B cell (primary cell): ENCODE measurements at regions of chr1 and their contacts with region 1.

Region 1: DNA sequence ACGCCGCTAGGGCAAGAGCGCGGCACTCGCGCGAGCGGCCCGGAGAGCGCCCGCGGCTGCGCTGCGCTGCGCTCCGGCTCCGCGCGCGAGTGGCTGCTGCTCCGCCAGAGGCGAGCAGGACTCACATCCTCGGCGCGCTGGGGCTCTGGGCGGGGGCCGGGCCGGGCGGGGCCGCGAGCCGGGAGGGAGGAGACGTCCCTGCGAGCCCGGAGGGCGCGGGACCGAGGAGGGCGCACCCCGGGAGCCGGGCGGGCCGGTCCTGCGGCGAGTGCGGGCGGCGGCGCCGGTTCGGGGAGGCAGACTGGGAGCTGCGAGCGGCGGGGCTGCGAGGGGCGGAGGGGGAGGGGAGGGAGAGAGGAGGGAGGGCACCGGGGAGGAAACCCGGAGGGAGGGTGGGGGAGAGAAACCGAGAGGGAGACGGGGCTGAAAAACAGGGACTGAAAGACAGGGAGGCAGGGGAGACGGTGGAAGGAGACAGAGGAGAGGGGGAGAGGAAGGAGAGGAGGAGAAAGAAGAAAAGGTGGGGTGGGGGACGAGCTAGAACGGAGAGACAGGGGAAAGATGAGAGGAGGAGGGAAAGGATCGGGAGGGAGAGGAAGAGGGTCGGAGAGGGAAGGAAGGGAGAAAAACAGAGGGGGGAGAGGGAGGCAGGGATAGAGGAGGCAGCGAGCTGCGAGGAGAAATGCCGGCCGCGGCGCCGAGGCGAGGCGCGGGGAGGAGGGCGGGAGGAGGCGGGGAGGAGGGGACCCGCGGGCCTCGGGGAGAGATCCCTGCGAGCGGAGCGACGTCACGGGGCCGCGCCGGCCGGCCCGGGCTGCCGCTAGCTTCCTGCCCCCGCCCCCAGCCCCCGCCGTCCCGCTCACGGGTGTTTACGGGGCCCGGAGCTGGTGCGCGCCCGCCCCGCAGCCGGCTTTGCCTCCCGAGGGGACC is at the start of gene CAMK2N1:
- DNase-seq: peak; percentile 59
- ATAC-seq: peak; percentile 58
- H3K4me3 ChIP-seq: peak within 1 kb of the TSS in 4 of 5 experiments; percentile 32 to 67 (median 56)
- H3K4me3 Mint-ChIP-seq: peak within 1 kb of the TSS; percentile 86
- H3K27ac ChIP-seq: no peak within 1 kb of the TSS
- H3K27ac Mint-ChIP-seq: peak within 1 kb of the TSS; percentile 41
- H3K4me1 ChIP-seq: peaks cover 25 to 27% of the 10 kb centered on the region in 2 donors
- H3K4me1 Mint-ChIP-seq: peaks cover 18% of the 10 kb centered on the region
- H3K27me3 ChIP-seq: peaks cover 0 to 63% (median 24%) of the 10 kb centered on the region in 4 experiments
- H3K27me3 Mint-ChIP-seq: peaks cover 63% of the 10 kb centered on the region
- CTCF ChIP-seq: no peak
- total RNA-seq, gene CAMK2N1: 6.0 and 6.5 TPM in 2 replicates

Region 2: DNA sequence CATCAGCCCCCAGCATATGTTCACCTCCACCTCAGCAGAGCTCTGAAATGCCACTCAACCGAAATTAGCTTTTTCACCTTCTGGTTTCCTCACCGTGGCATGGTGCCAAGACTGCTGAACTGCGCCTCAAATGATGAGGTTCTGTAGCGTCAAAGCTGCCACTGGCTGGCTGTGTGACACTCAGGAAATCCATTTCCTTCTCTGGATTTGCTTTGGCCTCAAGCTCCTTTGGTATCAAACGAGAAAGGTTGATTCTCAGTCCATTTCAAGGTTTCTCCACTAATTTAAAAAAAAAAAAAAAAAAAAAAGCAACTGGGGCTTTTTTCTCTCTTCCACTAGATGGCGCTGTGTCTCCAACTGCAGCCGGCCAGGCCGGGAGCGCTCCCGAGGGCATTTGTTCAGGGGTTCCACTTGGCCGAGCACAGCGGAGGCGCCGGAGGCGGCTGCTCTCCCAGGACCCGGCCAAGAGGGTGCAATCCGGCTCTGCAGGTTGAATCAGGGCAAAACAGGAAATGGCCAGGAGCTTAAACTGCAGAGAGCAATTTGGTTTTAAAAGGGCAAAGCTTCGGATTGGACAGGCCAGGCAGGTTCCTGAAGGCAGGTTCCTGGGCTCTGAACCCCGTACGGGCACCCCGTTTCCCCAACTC is 273.0 kb before region 1 on chr1:
- CTCF ChIA-PET with region 1: interaction called, 111 read pairs
- POLR2A ChIA-PET with region 1: interaction called, 15 read pairs
- intact Hi-C with region 1: no loop called
- DNase-seq: peak; percentile 77
- ATAC-seq: peak; percentile 90
- H3K4me3 ChIP-seq: peak overlapping the region in 4 of 5 experiments; percentile 6 to 44 (median 28)
- H3K4me3 Mint-ChIP-seq: peak overlapping the region; percentile 74
- H3K27ac ChIP-seq: no peak overlapping the region
- H3K27ac Mint-ChIP-seq: peak overlapping the region; percentile 53
- H3K4me1 ChIP-seq: peaks cover 10 to 16% of the 10 kb centered on the region in 2 donors
- H3K4me1 Mint-ChIP-seq: peaks cover 15% of the 10 kb centered on the region
- H3K27me3 ChIP-seq: peaks cover 0 to 38% (median 2%) of the 10 kb centered on the region in 4 experiments
- H3K27me3 Mint-ChIP-seq: peaks cover 14% of the 10 kb centered on the region
- CTCF ChIP-seq: peak; percentile 94

Region 3: DNA sequence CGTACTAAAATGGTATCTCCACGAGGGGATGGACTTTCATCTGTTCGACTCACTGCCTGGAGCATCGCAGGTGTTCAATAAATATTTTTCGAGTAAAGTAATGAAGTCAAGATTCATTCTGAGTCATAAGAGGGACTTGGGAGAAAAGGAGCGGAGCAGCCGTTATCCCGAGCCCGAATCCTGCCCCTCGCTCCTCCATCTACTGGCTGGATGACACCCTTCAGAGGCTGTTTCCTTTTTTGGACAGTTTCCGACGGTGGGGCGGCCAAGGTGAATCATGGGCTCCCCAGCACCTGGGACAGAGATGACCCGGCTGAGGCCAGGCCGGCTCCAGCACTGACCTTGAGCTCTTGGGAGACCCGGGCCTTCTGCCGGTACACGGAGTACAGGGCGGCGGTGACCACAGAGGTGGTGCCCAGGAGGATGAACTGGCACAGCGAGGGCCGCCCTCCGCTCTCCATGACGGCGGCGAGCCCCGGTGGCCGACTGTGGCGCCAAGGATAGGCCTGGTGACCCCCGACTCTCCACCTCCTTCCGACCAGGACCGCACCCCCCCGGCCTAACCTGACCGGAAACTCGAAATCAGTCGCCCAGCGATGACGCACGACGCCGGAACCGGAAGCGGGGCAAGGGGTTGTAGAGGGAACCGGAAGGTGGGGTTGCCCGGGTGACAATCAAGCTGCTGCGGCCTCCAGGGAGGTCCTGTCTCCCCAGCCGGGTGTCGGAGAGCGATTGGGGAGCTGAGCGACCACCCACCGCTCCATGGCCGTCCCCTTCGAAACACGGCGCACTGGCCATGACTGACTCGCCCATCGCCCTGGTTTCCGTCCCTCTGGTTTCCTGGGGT is 22.0 kb after region 1 on chr1 and contains the start of gene MUL1:
- CTCF ChIA-PET with region 1: no interaction called
- POLR2A ChIA-PET with region 1: interaction called, 6 read pairs
- intact Hi-C with region 1: loop called (anchors 2 kb)
- DNase-seq: peak; percentile 93
- ATAC-seq: peak; percentile 87
- H3K4me3 ChIP-seq: peak within 1 kb of the TSS; percentile 76 to 100 (median 86)
- H3K4me3 Mint-ChIP-seq: peak within 1 kb of the TSS; percentile 91
- H3K27ac ChIP-seq: peak within 1 kb of the TSS; percentile 93 to 96
- H3K27ac Mint-ChIP-seq: peak within 1 kb of the TSS; percentile 93
- H3K4me1 ChIP-seq: peaks cover 14 to 22% of the 10 kb centered on the region in 2 donors
- H3K4me1 Mint-ChIP-seq: peaks cover 22% of the 10 kb centered on the region
- H3K27me3 ChIP-seq: peaks cover 0 to 13% (median 1%) of the 10 kb centered on the region in 4 experiments
- H3K27me3 Mint-ChIP-seq: peaks cover 4% of the 10 kb centered on the region
- CTCF ChIP-seq: no peak
- total RNA-seq, gene MUL1: 23.9 and 24.6 TPM in 2 replicates

Region 4: DNA sequence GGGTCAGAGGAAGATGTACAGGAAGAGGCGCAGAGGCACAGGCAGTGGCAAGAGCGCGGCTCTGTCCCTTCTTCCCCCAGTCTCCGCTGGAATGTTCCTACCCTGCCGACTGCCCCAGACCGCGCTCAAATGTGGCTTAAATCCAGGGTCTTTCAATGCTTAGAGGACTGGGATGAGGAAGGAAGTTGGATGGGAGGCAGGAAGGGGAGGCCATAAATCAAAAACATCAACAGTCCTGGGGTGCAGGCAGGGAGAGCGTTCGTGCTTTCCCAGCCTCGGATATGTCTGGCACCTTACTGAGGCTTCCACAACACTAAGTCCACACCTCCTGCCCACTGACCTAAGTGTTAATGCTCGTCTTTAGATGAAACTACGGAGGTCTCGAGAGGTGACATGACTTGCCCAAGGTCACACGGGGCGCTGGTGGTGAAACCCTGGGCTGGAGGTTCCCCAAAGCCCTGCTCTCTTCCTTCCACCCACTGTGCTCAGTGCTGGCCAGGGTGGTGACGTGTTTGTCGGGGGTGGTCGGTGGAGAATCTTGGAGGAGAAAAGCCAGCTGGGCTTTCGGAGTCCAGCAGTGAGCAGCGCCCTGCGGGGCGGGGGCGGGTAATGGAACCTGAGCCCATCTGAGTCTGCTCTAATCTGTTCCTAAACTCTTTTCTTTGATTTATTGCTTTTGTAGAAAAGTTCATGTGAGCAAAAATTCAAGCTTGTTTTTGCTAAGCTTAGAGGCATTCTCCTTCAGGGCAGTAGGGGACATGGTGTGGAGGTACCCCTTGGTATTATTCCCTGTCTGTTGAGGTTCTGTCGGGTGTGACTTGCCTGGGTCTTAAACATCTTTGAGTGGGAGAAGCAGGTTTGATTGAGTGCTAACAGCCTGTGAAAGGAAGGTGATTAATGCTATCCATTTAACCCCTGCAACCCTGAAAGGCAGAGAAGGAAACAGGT is 103.8 kb after region 1 on chr1:
- CTCF ChIA-PET with region 1: no interaction called
- POLR2A ChIA-PET with region 1: no interaction called
- intact Hi-C with region 1: no loop called
- DNase-seq: no peak
- ATAC-seq: no peak
- H3K4me3 ChIP-seq: peak overlapping the region in 1 of 5 experiments; percentile 65
- H3K4me3 Mint-ChIP-seq: no peak overlapping the region
- H3K27ac ChIP-seq: no peak overlapping the region
- H3K27ac Mint-ChIP-seq: no peak overlapping the region
- H3K4me1 ChIP-seq: no peaks in the 10 kb centered on the region
- H3K4me1 Mint-ChIP-seq: no peaks in the 10 kb centered on the region
- H3K27me3 ChIP-seq: peaks cover 0 to 40% (median 13%) of the 10 kb centered on the region in 4 experiments
- H3K27me3 Mint-ChIP-seq: peaks cover 64% of the 10 kb centered on the region
- CTCF ChIP-seq: no peak

Region 5: GRCh38 chr1:21117597-21118001 is 631.8 kb after region 1 on chr1:
- CTCF ChIA-PET with region 1: no interaction called
- POLR2A ChIA-PET with region 1: no interaction called
- intact Hi-C with region 1: no loop called
- DNase-seq: no peak
- ATAC-seq: no peak
- H3K4me3 ChIP-seq: no peak overlapping the region
- H3K4me3 Mint-ChIP-seq: no peak overlapping the region
- H3K27ac ChIP-seq: no peak overlapping the region
- H3K27ac Mint-ChIP-seq: no peak overlapping the region
- H3K4me1 ChIP-seq: peaks cover 5 to 8% of the 10 kb centered on the region in 2 donors
- H3K4me1 Mint-ChIP-seq: peaks cover 8% of the 10 kb centered on the region
- H3K27me3 ChIP-seq: no peaks in the 10 kb centered on the region
- H3K27me3 Mint-ChIP-seq: no peaks in the 10 kb centered on the region
- CTCF ChIP-seq: no peak